CD4-positive, alpha-beta memory T cell (primary cell): ENCODE measurements at regions of chr3 and their contacts with region 1.

Region 1: GRCh38 chr3:64030741-64031140 is 7.4 kb upstream of the PSMD6 start:
- DNase-seq: peak; percentile 68 to 82 (median 71)
- H3K4me3 ChIP-seq: peak overlapping the region in 1 of 2 donors; percentile 50
- H3K4me3 Mint-ChIP-seq: peak overlapping the region; percentile 74 to 92 (median 88)
- H3K27ac ChIP-seq: no peak overlapping the region
- H3K27ac Mint-ChIP-seq: peak overlapping the region; percentile 3 to 90 (median 65)
- H3K4me1 ChIP-seq: peaks cover 7% of the 10 kb centered on the region
- H3K4me1 Mint-ChIP-seq: peaks cover 5 to 6% (median 5%) of the 10 kb centered on the region in 4 donors
- H3K27me3 ChIP-seq: peaks cover 4% of the 10 kb centered on the region
- H3K27me3 Mint-ChIP-seq: peaks cover 11% of the 10 kb centered on the region in 2 donors

Region 2: DNA sequence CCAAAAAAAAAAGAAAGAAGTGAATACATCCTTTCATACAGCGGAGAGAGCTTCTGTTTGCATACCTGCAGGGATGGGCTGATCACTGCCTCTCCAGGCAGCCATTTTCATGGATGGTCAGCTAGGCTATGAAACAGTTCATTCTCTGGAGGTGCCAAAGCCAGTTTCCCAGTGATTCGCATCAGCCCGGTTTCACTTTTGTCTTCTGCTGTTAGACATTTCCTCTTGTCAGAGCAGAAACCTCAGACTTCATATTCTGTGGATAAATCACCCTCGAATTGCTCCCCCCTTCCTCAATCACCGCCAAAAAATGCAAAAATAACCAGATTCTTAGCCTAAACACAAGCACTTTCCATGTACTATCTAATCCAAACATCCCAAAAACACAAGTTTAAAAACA is 431.5 kb after region 1 on chr3:
- CTCF ChIA-PET with region 1: interaction called, 12 read pairs
- POLR2A ChIA-PET with region 1: no interaction called
- intact Hi-C with region 1: no loop called
- DNase-seq: no peak
- H3K4me3 ChIP-seq: no peak overlapping the region
- H3K4me3 Mint-ChIP-seq: peak overlapping the region in 2 of 8 donors; percentile 0 to 28
- H3K27ac ChIP-seq: no peak overlapping the region
- H3K27ac Mint-ChIP-seq: no peak overlapping the region
- H3K4me1 ChIP-seq: no peaks in the 10 kb centered on the region
- H3K4me1 Mint-ChIP-seq: peaks cover 0 to 4% (median 1%) of the 10 kb centered on the region in 4 donors
- H3K27me3 ChIP-seq: no peaks in the 10 kb centered on the region
- H3K27me3 Mint-ChIP-seq: peaks cover 0 to 3% of the 10 kb centered on the region in 2 donors

Region 3: GRCh38 chr3:64484289-64484992 is 453.7 kb after region 1 on chr3:
- CTCF ChIA-PET with region 1: interaction called, 31 read pairs
- POLR2A ChIA-PET with region 1: no interaction called
- intact Hi-C with region 1: loop called (anchors 1 kb)
- DNase-seq: peak; percentile 40 to 49 (median 43)
- H3K4me3 ChIP-seq: no peak overlapping the region
- H3K4me3 Mint-ChIP-seq: no peak overlapping the region
- H3K27ac ChIP-seq: no peak overlapping the region
- H3K27ac Mint-ChIP-seq: no peak overlapping the region
- H3K4me1 ChIP-seq: no peaks in the 10 kb centered on the region
- H3K4me1 Mint-ChIP-seq: peaks cover 0 to 7% (median 4%) of the 10 kb centered on the region in 4 donors
- H3K27me3 ChIP-seq: no peaks in the 10 kb centered on the region
- H3K27me3 Mint-ChIP-seq: peaks cover 9 to 10% of the 10 kb centered on the region in 2 donors